Psoas muscle (tissue), 8 donors: ENCODE measurements at regions of chr2 and their contacts with region 1.

Region 1: DNA sequence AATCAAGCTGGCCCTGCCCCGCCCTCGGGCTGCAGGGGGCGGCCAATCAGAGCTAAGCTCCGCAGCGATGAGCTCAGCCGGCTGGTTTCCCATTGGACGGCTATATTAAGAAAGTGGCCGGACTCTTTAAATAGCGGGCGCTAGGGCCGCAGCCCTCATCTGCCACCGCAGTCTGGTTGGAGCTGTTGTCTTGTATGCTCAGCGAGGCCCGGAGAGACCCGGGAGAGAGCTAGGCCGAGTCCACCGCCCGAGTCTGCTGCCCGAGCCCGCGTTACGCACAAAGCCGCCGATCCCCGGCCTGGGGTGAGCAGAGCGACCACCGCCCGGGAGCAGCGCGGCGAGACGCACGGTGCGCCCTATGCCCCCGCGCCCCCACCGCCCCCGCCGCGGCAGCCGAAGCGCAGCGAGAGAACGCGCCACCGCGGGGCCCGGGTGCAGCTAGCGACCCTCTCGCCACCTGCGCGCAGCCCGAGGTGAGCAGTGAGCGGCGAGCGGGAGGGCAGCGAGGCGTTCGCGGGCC is at the start of gene RHOB:
- DNase-seq: peak; percentile 96 to 98
- ATAC-seq: peak; percentile 86 to 93 (median 92)
- H3K4me3 ChIP-seq: peak within 1 kb of the TSS; percentile 98
- H3K27ac ChIP-seq: peak within 1 kb of the TSS; percentile 99
- H3K4me1 ChIP-seq: peaks cover 19% of the 10 kb centered on the region
- H3K27me3 ChIP-seq: no peaks in the 10 kb centered on the region
- CTCF ChIP-seq: no peak
- total RNA-seq, gene RHOB: 111 to 370 (median 154) TPM

Region 2: GRCh38 chr2:20539133-20539719 is 92.2 kb after region 1 on chr2:
- intact Hi-C with region 1: loop called (anchors 2 to 5 kb)
- DNase-seq: peak; percentile 48 to 63
- ATAC-seq: peak; percentile 4 to 49 (median 42)
- H3K4me3 ChIP-seq: no peak overlapping the region
- H3K27ac ChIP-seq: peak overlapping the region; percentile 96
- H3K4me1 ChIP-seq: peaks cover 79% of the 10 kb centered on the region
- H3K27me3 ChIP-seq: no peaks in the 10 kb centered on the region
- CTCF ChIP-seq: no peak

Region 3: DNA sequence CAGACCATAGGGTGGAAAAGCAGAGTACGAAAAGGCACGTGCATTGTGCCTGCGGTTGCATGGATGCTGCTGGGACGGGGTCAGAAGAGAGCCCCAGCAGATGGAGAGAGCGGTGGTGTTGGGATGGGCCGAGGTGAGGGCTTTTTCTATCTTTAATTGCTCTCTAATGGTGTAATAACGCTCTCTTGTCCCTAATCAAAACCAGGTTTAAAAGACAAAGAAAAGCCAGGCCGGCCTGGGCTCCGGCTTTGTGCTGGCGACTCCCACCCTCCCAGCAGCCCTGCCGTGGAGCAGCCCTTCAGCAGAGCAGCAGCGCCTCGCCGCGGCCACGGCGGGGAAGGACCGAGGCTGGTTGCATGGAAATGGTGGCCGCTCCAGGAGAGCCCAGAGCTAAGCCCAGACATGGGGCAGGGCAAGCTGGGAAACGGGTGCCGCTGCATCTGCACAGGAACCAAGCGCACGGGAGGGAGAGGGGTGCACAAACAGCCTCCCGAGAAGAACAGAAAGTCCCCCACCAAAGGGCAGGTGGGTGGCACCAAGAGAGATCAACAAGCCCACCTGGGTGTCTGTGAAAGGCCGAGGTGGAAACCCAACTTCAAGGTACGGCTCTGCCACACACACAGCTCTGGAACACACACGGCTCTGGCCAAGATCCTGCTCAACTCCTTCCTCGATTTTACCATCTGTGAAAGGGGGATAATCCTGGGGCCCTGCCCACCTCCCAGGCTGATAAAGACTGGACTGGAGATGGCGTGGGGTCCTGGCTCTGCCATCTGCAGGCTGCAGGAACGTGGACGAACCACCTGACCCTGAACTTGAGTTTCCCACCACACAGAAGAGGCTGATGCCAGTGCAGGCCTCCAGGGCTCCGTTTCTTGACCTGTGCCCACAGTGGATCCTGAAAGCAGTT is 189.0 kb after region 1 on chr2:
- intact Hi-C with region 1: loop called in 1 of 2 experiments (anchors 1 kb)
- DNase-seq: peak; percentile 87 to 92
- ATAC-seq: peak; percentile 89 to 98 (median 93)
- H3K4me3 ChIP-seq: no peak overlapping the region
- H3K27ac ChIP-seq: no peak overlapping the region
- H3K4me1 ChIP-seq: peaks cover 20% of the 10 kb centered on the region
- H3K27me3 ChIP-seq: no peaks in the 10 kb centered on the region
- CTCF ChIP-seq: peak; percentile 98